Colonic mucosa (tissue), 4 donors: ENCODE measurements at regions of chr4 and their contacts with region 1.

Region 1: GRCh38 chr4:48307528-48307927 is 33.8 kb upstream of the SLAIN2 start:
- DNase-seq: no peak
- H3K4me3 ChIP-seq: no peak overlapping the region
- H3K27ac ChIP-seq: no peak overlapping the region
- H3K4me1 ChIP-seq: no peaks in the 10 kb centered on the region
- H3K27me3 ChIP-seq: no peaks in the 10 kb centered on the region
- CTCF ChIP-seq: no peak

Region 2: DNA sequence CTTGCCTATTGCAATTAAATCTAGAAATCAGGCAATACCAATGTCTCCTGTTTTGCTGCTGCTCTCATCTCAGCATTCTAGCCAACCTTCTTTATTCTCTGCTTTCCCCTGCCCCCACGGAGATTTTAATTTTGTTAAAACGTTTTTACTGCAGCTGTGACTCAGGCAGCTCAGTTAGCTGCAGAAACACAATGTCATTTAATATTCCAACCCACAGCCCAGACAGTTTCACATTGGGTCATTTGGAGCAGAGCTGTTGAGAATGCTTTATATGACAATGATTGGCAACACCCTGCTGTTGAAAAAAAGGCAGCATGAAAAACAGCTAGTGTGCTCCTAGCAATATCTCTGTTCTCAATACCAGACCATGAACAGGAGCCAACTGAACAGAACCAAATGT is 163.0 kb after region 1 on chr4:
- intact Hi-C with region 1: loop called (anchors 10 kb)
- DNase-seq: no peak
- H3K4me3 ChIP-seq: no peak overlapping the region
- H3K27ac ChIP-seq: no peak overlapping the region
- H3K4me1 ChIP-seq: no peaks in the 10 kb centered on the region
- H3K27me3 ChIP-seq: no peaks in the 10 kb centered on the region
- CTCF ChIP-seq: no peak